ENCODE measurements at regions of chr3 and their contacts with region 1.

Region 1: DNA sequence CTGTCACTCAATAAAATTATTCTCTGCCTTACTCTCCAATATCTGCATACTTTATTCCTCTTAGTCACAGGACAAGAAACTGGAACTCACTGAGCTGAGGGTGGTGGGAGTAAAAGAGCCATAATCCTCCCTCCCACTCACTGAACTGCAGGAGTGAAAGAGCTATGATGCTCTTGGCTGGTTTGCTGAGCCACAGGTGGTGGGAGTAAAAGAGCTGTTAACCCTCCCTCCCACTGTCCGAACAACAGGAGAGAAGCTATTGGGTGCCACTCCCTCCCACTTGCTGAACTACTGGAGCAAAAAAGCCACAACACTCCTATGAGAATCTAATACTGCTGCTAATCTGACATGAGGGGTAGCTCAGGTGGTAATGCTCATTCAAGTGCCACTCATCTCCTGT is 391.0 kb downstream of the NSUN3 start:
- DNase-seq: no peak
- ATAC-seq: no peak

Region 2: GRCh38 chr3:94336046-94336710 is 117.7 kb before region 1 on chr3:
- intact Hi-C with region 1: no loop called
- DNase-seq: no peak
- ATAC-seq: peak; percentile 79

Region 3: DNA sequence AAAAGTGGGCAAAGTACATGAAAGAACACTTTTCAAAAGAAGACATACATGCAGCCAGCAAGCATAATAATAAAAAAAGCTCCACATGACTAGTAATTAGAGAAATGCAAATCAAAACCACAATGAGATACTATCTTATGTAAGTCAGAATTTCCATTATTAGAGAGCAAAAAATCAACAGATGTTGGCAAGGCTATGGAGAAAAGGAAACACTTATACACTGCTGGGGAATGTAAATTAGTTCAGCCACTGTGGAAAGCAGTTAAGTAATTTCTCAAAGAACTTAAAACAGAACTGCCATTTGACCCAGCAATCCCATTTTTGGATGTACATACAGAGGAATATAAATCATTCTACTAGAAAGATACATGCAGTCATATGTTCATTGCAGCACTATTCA is 30.3 kb before region 1 on chr3:
- intact Hi-C with region 1: loop called (anchors 1 kb)
- DNase-seq: no peak
- ATAC-seq: no peak

Measured in Right ventricle myocardium inferior (tissue), 1 donor.